Activated T-helper 1 cell treated with anti-CD3 and anti-CD28 coated beads, Interleukin-12 subunit alpha, Interleukin-12 subunit beta, Interleukin-2, Interleukin-4 antibody, amounts not matched to agents 30 ng/mL and 10 ng/mL and 1 ng/mL, durations not matched to agents 14 hours and 24 hours and 36 hours (primary cell): ENCODE measurements at regions of chrX and their contacts with region 1.

Region 1: DNA sequence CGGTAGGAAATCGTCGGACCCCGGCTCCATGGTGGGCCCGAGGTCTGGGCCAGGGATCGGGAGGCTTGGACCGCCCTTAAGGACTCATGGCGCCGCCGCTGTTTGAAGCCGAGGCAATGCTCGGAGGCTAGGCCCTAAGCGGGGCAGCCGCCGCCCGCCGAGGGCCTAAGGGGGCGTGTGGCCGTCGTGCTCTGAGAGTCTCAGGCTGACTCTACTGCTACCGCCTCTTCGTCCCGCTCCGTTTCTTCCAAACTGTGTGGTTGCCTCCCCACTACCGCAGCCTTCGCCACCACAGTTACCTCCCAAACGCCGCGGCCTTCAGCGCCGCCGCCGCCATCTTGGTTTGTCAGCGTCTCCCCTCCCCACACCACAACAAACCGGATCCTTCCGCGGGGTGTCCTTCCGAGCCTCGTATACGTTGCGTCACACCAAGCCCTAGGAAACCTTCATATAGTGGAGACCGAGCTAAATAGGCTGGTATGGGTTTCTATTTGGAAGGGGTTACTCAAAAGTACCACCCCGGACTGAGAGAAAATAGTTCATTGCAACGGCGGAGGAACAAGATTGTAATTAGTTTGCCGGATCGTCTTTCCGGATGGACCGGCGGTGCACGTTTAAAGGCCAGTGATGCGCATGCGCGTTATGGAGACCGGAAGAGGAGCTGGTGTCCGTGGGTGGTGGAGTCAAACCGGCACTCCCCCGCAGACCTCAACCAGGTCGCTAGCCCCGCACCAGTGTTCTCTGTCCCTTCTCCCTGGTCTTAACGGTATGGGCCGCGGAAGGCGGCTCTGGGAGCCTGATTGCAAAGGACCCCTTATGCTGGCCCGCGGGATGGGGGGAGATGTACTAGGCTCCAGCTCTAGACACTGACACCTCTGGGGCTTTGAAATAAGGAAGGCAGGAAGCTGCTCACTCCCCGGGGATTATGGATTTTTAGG is at the start of gene KDM5C:
- DNase-seq: peak; percentile 80
- H3K4me3 Mint-ChIP-seq: peak within 1 kb of the TSS; percentile 97
- H3K27ac Mint-ChIP-seq: peak within 1 kb of the TSS; percentile 98
- H3K4me1 Mint-ChIP-seq: peaks cover 50% of the 10 kb centered on the region
- H3K27me3 Mint-ChIP-seq: no peaks in the 10 kb centered on the region
- total RNA-seq, gene KDM5C: 115 and 120 TPM in 2 replicates

Region 2: GRCh38 chrX:52995135-52996020 is 229.8 kb before region 1 on chrX:
- intact Hi-C with region 1: loop called (anchors 5 kb)
- DNase-seq: peak; percentile 88
- H3K4me3 Mint-ChIP-seq: peak overlapping the region; percentile 89
- H3K27ac Mint-ChIP-seq: peak overlapping the region; percentile 95
- H3K4me1 Mint-ChIP-seq: peaks cover 21% of the 10 kb centered on the region
- H3K27me3 Mint-ChIP-seq: no peaks in the 10 kb centered on the region

Region 3: DNA sequence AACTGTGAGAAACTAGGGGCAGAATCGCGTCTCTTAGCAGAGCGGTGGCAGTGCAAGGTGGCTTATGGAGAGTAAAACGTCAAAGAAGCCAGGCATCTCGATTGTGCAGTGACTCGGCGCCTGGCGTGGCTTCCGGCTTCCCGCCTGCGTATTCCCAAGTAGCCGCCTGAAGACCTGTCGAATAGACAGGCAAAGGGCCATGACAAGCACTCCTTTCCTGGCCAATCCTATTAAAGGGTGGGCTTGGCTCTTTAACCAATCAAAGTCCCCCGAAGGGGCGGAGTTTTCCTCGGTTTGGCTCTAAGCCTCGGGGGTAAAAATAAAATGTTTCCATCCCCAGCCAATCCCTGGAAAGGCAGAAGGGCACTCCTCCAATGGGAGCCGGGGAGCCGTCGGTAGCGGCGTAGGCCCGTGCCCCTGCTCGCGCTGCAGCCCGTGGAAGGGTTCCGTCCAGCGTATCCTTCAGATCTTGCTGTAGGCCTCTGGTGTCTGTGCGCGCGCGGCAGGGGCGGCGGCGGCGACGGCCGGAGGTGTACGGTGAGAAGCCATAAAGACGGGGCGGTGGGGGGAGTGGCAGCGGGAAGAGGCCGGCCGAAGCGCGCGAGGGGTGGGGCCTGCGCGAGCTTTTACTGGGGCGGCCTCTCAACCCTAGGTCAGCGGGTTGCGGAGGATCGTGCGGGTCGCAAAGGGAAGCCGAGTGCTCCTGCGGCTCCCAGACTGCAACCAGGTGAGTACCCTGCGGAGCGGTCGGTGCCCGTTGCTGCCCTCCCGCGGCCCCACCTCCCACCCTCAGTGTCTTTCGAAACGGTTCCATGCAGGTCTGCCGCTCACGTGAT is 131.2 kb before region 1 on chrX and contains the start of gene KANTR:
- intact Hi-C with region 1: loop called (anchors 1 kb)
- DNase-seq: peak; percentile 77
- H3K4me3 Mint-ChIP-seq: peak within 1 kb of the TSS; percentile 90
- H3K27ac Mint-ChIP-seq: peak within 1 kb of the TSS; percentile 90
- H3K4me1 Mint-ChIP-seq: peaks cover 30% of the 10 kb centered on the region
- H3K27me3 Mint-ChIP-seq: peaks cover 1% of the 10 kb centered on the region
- total RNA-seq, gene KANTR: 6.8 and 9.2 TPM in 2 replicates

Region 4: GRCh38 chrX:53422086-53422860 is 197.1 kb after region 1 on chrX and contains the start of gene SMC1A:
- intact Hi-C with region 1: loop called (anchors 1 kb)
- DNase-seq: peak; percentile 93
- H3K4me3 Mint-ChIP-seq: peak within 1 kb of the TSS; percentile 97
- H3K27ac Mint-ChIP-seq: peak within 1 kb of the TSS; percentile 95
- H3K4me1 Mint-ChIP-seq: peaks cover 35% of the 10 kb centered on the region
- H3K27me3 Mint-ChIP-seq: no peaks in the 10 kb centered on the region
- total RNA-seq, gene SMC1A: 122 and 138 TPM in 2 replicates

Region 5: GRCh38 chrX:53538781-53539180 is 313.7 kb after region 1 on chrX:
- intact Hi-C with region 1: loop called (anchors 10 kb)
- DNase-seq: no peak
- H3K4me3 Mint-ChIP-seq: no peak overlapping the region
- H3K27ac Mint-ChIP-seq: no peak overlapping the region
- H3K4me1 Mint-ChIP-seq: no peaks in the 10 kb centered on the region
- H3K27me3 Mint-ChIP-seq: no peaks in the 10 kb centered on the region